Mammary epithelial cell (primary cell): ENCODE measurements at regions of chr10 and their contacts with region 1.

Region 1: DNA sequence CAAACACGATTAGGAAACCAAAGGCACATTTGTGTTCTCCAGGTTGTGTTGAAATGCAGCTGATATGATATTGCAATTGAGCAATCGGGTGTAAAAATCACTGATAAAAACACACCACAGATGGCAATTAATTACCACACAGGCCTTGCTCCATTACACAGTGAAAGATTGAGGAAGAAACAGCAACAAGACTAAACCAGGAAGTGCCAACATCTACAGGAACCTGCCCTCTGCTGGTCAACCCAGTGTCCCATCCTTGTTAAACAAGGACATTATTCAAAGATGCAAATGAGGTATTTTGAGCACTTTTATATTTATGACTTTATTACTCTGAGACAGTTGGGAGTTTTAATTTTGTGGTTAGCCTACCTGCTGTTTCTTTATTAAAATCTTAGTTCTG is 765.6 kb upstream of the GHITM start:
- DNase-seq: peak; percentile 47
- H3K4me3 ChIP-seq: no peak overlapping the region
- H3K27ac ChIP-seq: no peak overlapping the region
- H3K4me1 ChIP-seq: no peaks in the 10 kb centered on the region
- H3K27me3 ChIP-seq: no peaks in the 10 kb centered on the region
- CTCF ChIP-seq: peak; percentile 76

Region 2: DNA sequence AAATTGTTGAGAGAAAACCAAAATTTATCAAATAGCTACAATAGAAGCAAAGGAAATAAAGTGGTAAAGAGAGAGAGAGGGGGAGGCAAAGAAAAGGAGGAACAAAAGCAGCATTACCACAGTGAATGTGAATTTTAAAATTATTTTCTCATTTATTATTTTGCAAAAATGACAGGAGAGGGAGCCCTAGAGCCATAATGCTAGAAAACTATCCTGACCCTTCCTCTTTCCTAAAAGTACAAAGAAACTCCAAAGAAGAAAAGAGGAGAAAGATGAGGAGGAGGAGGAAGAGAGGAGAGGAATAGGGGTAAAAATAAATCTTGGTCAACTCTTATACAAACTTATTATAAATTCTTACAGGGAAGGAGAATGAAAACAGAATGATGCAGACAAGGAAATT is 577.2 kb before region 1 on chr10:
- CTCF ChIA-PET with region 1: no interaction called
- dilution Hi-C with region 1: no loop called
- in situ Hi-C with region 1: no loop called
- intact Hi-C with region 1: loop called (anchors 2 kb)
- DNase-seq: no peak
- H3K4me3 ChIP-seq: no peak overlapping the region
- H3K27ac ChIP-seq: no peak overlapping the region
- H3K4me1 ChIP-seq: no peaks in the 10 kb centered on the region
- H3K27me3 ChIP-seq: no peaks in the 10 kb centered on the region
- CTCF ChIP-seq: peak; percentile 45 to 52

Region 3: DNA sequence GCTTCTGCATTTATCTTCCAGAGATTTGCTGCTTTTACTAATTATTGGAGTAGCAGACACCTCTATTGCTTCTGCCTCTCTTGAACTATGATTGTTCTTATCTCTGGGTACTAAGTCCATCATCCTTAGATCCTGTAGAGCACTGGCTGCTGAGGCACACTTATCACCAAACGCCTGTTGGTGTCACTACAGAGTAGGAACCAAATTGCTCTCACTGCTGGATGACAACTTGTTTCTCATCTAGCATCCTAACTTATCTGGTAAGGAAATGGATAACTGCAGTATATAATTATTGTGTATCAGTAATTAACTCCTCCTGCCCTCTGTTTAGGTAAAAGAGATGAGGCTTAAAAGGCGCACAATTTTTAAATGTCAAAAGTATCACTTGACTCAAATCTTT is 439.2 kb before region 1 on chr10:
- CTCF ChIA-PET with region 1: no interaction called
- dilution Hi-C with region 1: no loop called
- in situ Hi-C with region 1: no loop called
- intact Hi-C with region 1: loop called (anchors 1 kb)
- DNase-seq: peak; percentile 17
- H3K4me3 ChIP-seq: no peak overlapping the region
- H3K27ac ChIP-seq: no peak overlapping the region
- H3K4me1 ChIP-seq: no peaks in the 10 kb centered on the region
- H3K27me3 ChIP-seq: no peaks in the 10 kb centered on the region
- CTCF ChIP-seq: peak in 1 of 2 donors; percentile 38

Region 4: GRCh38 chr10:82982110-82982608 is 391.5 kb before region 1 on chr10:
- CTCF ChIA-PET with region 1: no interaction called
- dilution Hi-C with region 1: no loop called
- in situ Hi-C with region 1: no loop called
- intact Hi-C with region 1: loop called (anchors 2 kb)
- DNase-seq: peak; percentile 87
- H3K4me3 ChIP-seq: no peak overlapping the region
- H3K27ac ChIP-seq: peak overlapping the region; percentile 94
- H3K4me1 ChIP-seq: peaks cover 30% of the 10 kb centered on the region
- H3K27me3 ChIP-seq: no peaks in the 10 kb centered on the region
- CTCF ChIP-seq: no peak

Region 5: GRCh38 chr10:83397806-83398205 is 24.1 kb after region 1 on chr10:
- CTCF ChIA-PET with region 1: no interaction called
- dilution Hi-C with region 1: no loop called
- in situ Hi-C with region 1: no loop called
- intact Hi-C with region 1: no loop called
- DNase-seq: no peak
- H3K4me3 ChIP-seq: no peak overlapping the region
- H3K27ac ChIP-seq: no peak overlapping the region
- H3K4me1 ChIP-seq: no peaks in the 10 kb centered on the region
- H3K27me3 ChIP-seq: no peaks in the 10 kb centered on the region
- CTCF ChIP-seq: no peak